ENCODE measurements at regions of chr16 and their contacts with region 1.

Region 1: GRCh38 chr16:48623304-48624016 is 13.5 kb upstream of the N4BP1 start:
- DNase-seq: peak; percentile 85
- H3K4me3 Mint-ChIP-seq: peak overlapping the region; percentile 73
- H3K27ac Mint-ChIP-seq: peak overlapping the region; percentile 71
- H3K4me1 Mint-ChIP-seq: peaks cover 23% of the 10 kb centered on the region
- H3K27me3 Mint-ChIP-seq: no peaks in the 10 kb centered on the region

Region 2: GRCh38 chr16:48231727-48232492 is 391.6 kb before region 1 on chr16:
- CTCF ChIA-PET with region 1: interaction called, 5 read pairs
- intact Hi-C with region 1: loop called (anchors 1 kb)
- DNase-seq: peak; percentile 73
- H3K4me3 Mint-ChIP-seq: no peak overlapping the region
- H3K27ac Mint-ChIP-seq: peak overlapping the region; percentile 50
- H3K4me1 Mint-ChIP-seq: peaks cover 21% of the 10 kb centered on the region
- H3K27me3 Mint-ChIP-seq: peaks cover 2% of the 10 kb centered on the region

Region 3: DNA sequence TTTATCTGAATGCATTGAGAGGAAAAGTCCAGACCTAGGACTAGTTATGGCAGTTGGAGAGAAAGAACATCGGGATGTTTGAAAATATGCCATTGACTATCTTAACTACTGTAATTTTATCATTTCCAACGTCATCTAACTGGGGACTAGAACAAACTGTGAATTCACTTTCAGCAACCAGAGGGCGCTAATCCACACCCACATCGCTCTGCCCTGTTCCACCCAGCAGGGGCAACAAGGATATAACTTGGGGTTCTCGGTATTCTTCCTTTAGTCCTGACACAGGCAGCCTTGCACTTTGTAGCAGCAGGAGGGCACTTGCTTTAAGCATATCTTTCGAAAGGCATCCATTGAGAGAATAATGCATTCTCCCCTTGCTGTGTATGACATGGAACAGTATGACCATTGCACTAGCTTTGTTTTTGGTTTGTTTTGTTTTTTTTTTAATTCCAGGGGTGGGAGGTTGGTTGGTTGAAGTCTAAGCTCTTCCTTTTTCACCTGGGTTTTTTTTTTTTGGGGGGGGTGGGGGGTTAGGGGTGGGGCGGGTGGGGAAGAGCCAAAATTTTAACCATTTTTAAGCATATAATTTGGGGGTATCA is 269.8 kb before region 1 on chr16:
- CTCF ChIA-PET with region 1: interaction called, 34 read pairs
- intact Hi-C with region 1: loop called (anchors 1 kb)
- DNase-seq: peak; percentile 79
- H3K4me3 Mint-ChIP-seq: no peak overlapping the region
- H3K27ac Mint-ChIP-seq: peak overlapping the region; percentile 54
- H3K4me1 Mint-ChIP-seq: peaks cover 18% of the 10 kb centered on the region
- H3K27me3 Mint-ChIP-seq: no peaks in the 10 kb centered on the region

Region 4: GRCh38 chr16:48526058-48526957 is 97.2 kb before region 1 on chr16:
- CTCF ChIA-PET with region 1: interaction called, 38 read pairs
- intact Hi-C with region 1: no loop called
- DNase-seq: peak; percentile 74
- H3K4me3 Mint-ChIP-seq: no peak overlapping the region
- H3K27ac Mint-ChIP-seq: no peak overlapping the region
- H3K4me1 Mint-ChIP-seq: no peaks in the 10 kb centered on the region
- H3K27me3 Mint-ChIP-seq: no peaks in the 10 kb centered on the region

Region 5: DNA sequence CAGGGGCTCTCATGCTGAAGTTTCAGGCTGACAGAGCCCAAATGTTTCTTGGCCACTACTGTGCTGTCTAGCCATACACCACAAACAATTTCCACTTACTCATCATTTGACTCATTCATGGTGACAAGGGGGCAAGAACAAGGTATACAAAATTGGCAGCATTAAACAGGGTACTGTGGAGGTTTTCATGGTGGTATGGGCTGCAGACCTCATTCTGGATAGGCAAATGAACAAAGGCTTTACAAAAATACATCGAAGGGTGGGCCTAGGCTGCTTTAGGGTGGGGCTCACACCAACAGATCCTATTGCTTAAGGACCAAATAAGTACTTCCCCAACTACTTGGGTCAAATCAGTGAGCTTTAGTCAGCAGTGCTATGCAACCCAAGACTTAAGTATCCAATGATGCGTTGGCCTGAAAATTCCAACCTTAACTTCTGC is 66.5 kb before region 1 on chr16:
- CTCF ChIA-PET with region 1: interaction called, 8 read pairs
- intact Hi-C with region 1: loop called (anchors 1 kb)
- DNase-seq: peak; percentile 43
- H3K4me3 Mint-ChIP-seq: no peak overlapping the region
- H3K27ac Mint-ChIP-seq: peak overlapping the region; percentile 58
- H3K4me1 Mint-ChIP-seq: peaks cover 80% of the 10 kb centered on the region
- H3K27me3 Mint-ChIP-seq: no peaks in the 10 kb centered on the region

Region 6: DNA sequence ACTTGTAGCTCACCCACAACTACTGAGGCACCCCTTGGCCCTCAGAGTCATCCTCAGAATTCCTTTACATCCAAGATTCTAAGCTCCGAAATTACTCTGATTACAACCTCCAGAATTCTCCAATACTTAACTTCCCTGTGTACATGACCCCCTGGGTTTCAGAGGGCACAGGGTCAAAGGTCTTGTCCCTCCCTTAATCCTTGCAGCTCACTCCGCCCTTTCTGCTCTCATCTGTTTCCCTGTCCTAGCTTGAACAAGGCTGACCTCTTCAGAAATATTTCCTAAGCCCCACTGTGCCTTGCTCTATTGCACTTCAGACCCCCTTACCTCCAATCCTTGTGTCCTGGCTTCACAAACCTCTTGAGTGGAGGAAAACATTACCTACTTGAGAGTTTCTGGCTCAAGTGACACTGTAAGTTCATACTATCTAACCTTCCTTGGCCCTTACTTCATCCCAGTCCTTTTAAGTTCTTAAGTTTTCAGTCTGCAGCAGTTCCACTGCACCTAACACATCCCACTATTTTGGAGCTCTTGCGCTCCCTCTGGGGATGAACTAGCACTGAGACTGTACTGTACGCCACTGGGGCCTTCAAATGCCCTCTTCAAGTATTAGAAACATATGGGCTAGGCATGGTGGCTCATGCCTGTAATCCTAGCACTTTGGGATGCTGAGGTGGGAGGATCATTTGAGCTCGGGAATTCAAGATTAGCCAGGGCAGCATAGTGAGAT is 19.6 kb before region 1 on chr16:
- CTCF ChIA-PET with region 1: interaction called, 13 read pairs
- intact Hi-C with region 1: loop called (anchors 1 kb)
- DNase-seq: no peak
- H3K4me3 Mint-ChIP-seq: no peak overlapping the region
- H3K27ac Mint-ChIP-seq: no peak overlapping the region
- H3K4me1 Mint-ChIP-seq: peaks cover 38% of the 10 kb centered on the region
- H3K27me3 Mint-ChIP-seq: no peaks in the 10 kb centered on the region

Region 7: DNA sequence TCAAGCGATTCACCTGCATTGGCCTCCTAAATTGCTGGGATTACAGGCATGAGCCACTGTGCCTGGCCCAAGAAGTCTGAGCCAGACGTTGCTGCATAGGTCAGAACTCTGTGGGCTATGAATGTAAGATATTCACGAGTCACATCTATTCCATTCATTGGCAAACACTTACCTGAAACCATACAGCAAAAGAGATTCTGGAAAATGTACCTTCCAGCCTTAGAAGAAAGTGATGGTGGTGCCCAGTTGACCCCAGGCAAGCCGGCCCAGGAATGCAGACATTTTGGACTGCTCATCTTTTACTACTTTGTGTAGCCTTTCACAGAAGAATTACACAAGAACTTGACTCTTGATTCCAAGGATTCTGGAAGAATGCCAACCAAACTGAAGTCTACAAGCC is 122.1 kb after region 1 on chr16:
- CTCF ChIA-PET with region 1: no interaction called
- intact Hi-C with region 1: no loop called
- DNase-seq: no peak
- H3K4me3 Mint-ChIP-seq: no peak overlapping the region
- H3K27ac Mint-ChIP-seq: no peak overlapping the region
- H3K4me1 Mint-ChIP-seq: no peaks in the 10 kb centered on the region
- H3K27me3 Mint-ChIP-seq: no peaks in the 10 kb centered on the region

Measured in activated naive CD4-positive, alpha-beta T cell treated with anti-CD3 and anti-CD28 coated beads for 36 hours (primary cell).